H1 (cell line): ENCODE measurements at regions of chr10 and their contacts with region 1.

Region 1: GRCh38 chr10:88728107-88728763 is 22.2 kb downstream of the LIPK start:
- DNase-seq: peak; percentile 93 to 99
- H3K4me3 ChIP-seq: no peak overlapping the region
- H3K27ac ChIP-seq: no peak overlapping the region
- H3K4me1 ChIP-seq: peaks cover 0 to 6% (median 2%) of the 10 kb centered on the region in 4 experiments; a peak in 3 of 7 replicates
- H3K27me3 ChIP-seq: peaks cover 0 to 3% (median 0%) of the 10 kb centered on the region in 4 experiments; a peak in 2 of 7 replicates
- CTCF ChIP-seq: peak; percentile 99 to 100 (median 100)
- EP300 ChIP-seq: peak in 1 of 2 experiments; percentile 53; a peak in 1 of 3 replicates
- POLR2A ChIP-seq: no peak
- RAD21 ChIP-seq: peak; percentile 95

Region 2: DNA sequence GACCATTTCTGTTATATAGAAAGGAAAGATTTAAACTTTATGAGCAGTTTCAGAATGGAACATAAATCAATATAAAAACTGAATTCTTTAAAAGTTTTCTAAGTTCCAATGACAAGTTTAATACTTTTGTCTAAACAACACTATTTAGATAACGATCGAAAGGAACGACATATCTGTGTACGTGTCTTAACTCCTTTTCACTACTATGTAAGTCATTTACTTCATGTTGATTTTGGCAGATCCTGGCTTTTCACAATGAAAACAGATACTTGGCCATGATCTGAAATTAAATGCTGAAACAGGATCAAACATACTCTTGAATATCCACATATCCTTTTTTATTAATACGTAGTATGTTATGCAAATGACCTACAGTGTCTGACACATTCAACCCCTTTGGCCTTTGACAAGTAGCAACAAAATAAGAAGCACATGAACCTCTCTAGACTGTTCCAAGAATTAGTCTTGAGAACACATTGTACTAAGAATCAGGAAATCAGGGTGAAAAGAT is 187.1 kb before region 1 on chr10:
- CTCF ChIA-PET with region 1: no interaction called
- POLR2A ChIA-PET with region 1: no interaction called
- DNase-seq: no peak
- H3K4me3 ChIP-seq: no peak overlapping the region
- H3K27ac ChIP-seq: no peak overlapping the region
- H3K4me1 ChIP-seq: no peaks in the 10 kb centered on the region
- H3K27me3 ChIP-seq: no peaks in the 10 kb centered on the region
- CTCF ChIP-seq: no peak
- EP300 ChIP-seq: no peak
- POLR2A ChIP-seq: no peak
- RAD21 ChIP-seq: no peak

Region 3: DNA sequence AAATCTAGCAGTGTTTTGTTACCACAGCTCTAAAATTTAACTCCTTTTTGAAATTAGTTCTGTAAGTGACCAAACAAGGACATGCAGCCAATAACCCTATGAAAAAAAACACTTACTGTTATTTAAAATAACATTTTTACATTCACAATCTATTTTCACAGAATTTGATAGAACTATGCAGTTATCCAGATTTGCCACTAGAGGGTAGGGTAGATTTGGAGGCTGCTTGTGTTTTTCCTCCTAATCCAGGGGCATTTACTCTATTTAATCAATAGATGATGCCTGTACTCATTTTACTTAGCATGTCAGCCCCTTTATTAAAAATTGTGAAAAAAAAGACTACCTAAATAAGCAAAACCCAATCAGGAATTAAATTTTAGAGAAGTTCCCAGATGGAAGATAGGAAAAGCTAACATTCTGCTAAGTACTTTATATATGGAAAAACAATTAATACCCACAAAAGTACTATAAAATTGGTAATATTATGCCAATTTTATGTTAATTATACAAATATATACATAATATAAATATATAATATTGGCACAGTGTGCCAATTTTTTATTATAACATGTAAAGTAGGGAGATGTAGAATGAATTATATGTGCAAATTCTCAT is 40.3 kb before region 1 on chr10:
- CTCF ChIA-PET with region 1: interaction called, 63 read pairs
- POLR2A ChIA-PET with region 1: no interaction called
- DNase-seq: no peak
- H3K4me3 ChIP-seq: no peak overlapping the region
- H3K27ac ChIP-seq: no peak overlapping the region
- H3K4me1 ChIP-seq: no peaks in the 10 kb centered on the region
- H3K27me3 ChIP-seq: peaks cover 0 to 2% (median 0%) of the 10 kb centered on the region in 4 experiments; a peak in 1 of 7 replicates
- CTCF ChIP-seq: peak in 2 of 3 experiments; percentile 45 to 50; a peak in 2 of 4 replicates
- EP300 ChIP-seq: no peak
- POLR2A ChIP-seq: no peak
- RAD21 ChIP-seq: peak; percentile 61 to 62

Region 4: DNA sequence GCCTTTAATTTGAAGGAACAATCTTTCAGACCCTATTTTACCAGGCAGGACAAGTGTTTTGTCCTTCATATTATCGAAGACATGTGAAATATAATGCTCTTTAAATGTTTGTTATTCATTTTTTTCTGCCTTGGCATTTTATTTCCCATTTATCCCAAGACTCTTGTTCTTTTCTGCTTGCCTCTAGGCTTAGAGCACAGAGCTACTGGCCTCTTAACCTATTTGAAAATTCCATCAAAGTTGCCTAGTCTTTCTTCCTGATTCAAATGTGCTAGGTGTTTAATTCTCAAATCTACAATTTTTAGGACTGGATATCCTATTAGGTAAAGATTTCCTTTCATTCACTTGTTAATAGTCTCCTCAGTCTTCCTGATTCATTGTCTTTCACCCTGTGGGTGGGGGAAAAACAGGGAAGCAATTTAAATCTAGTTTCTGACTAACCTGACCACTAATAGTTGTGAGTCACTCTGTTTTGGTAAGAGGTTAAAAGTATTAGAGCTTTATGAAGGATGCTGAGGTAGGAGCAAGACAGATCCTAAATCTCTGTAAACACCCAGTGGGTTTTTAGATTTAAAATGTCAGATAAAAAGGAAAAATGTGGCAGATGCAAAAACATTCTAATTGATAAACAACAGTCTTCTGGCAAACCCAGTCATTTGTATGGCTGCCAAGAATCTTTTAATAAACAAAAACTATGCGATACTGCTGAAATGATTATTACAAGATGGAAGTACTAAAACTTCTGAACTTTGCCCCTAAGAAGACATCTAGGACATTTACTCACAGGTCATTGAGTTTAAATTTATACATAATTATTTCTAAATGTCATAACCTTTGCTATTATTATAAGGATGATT is 20.6 kb before region 1 on chr10:
- CTCF ChIA-PET with region 1: interaction called, 30 read pairs
- POLR2A ChIA-PET with region 1: interaction called, 4 read pairs
- DNase-seq: no peak
- H3K4me3 ChIP-seq: 0 out of 8 replicates have a peak overlapping the region, but pooled peaks of 1 of the 4 experiments have one; percentile 19
- H3K27ac ChIP-seq: no peak overlapping the region
- H3K4me1 ChIP-seq: peaks cover 0 to 5% (median 1%) of the 10 kb centered on the region in 4 experiments; a peak in 1 of 7 replicates
- H3K27me3 ChIP-seq: peaks cover 17 to 42% (median 31%) of the 10 kb centered on the region in 4 experiments; a peak in 6 of 7 replicates
- CTCF ChIP-seq: no peak
- EP300 ChIP-seq: no peak
- POLR2A ChIP-seq: no peak
- RAD21 ChIP-seq: no peak

Region 5: GRCh38 chr10:88754287-88754686 is 26.1 kb after region 1 on chr10:
- CTCF ChIA-PET with region 1: interaction called, 95 read pairs
- POLR2A ChIA-PET with region 1: no interaction called
- DNase-seq: no peak
- H3K4me3 ChIP-seq: no peak overlapping the region
- H3K27ac ChIP-seq: no peak overlapping the region
- H3K4me1 ChIP-seq: peaks cover 0 to 5% (median 1%) of the 10 kb centered on the region in 4 experiments; a peak in 3 of 7 replicates
- H3K27me3 ChIP-seq: no peaks in the 10 kb centered on the region
- CTCF ChIP-seq: no peak
- EP300 ChIP-seq: no peak
- POLR2A ChIP-seq: no peak
- RAD21 ChIP-seq: no peak

Region 6: DNA sequence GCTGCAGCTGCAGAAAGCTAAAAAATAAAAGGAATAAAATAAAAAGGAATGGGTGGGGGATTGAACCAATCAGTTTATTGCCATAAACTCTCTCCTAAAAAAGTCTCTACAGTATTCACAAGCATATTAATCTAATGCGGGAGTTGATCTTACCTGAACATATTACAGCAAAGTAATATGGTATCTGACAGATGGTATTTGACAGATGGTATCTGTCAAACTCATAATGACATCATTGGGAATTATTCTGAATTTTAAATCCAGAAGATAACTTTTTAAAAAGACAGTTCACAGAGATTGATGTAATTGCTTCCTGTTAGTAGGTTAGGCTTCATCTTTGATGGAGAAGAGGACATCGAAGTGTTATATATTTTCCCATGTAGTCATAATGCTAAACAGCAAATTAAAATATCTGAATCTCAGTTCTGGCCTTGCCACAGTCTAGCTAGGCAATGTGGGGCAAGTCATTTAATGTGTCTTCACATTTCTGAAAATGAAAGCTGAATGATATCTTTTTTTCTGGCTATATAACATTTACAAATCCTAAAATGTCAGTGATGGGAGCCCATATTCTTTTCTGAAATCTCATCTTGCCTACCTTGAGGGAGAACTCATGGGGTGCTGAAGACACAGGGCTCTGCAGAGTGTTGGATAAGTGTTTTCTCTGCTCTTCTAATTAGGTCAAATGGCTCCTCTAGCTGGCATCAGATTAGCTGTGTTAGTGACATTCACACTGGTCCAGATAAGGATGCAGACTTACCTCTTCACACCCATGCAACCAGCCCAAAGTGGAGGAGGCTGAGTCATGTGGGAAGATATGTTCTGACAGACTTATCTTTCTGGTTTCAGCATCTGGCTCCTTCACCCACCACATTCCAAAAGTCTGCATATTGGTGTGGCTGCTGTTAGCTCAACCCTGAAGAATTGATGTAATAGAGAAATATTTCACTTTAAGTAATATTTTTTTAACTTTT is 72.2 kb after region 1 on chr10:
- CTCF ChIA-PET with region 1: interaction called, 16 read pairs
- POLR2A ChIA-PET with region 1: no interaction called
- DNase-seq: no peak
- H3K4me3 ChIP-seq: no peak overlapping the region
- H3K27ac ChIP-seq: no peak overlapping the region
- H3K4me1 ChIP-seq: peaks cover 0 to 3% (median under 1%) of the 10 kb centered on the region in 4 experiments; a peak in 3 of 7 replicates
- H3K27me3 ChIP-seq: no peaks in the 10 kb centered on the region
- CTCF ChIP-seq: no peak
- EP300 ChIP-seq: no peak
- POLR2A ChIP-seq: no peak
- RAD21 ChIP-seq: no peak

Region 7: GRCh38 chr10:88820748-88821389 is 92.6 kb after region 1 on chr10:
- CTCF ChIA-PET with region 1: interaction called, 10 read pairs
- POLR2A ChIA-PET with region 1: no interaction called
- DNase-seq: no peak
- H3K4me3 ChIP-seq: no peak overlapping the region
- H3K27ac ChIP-seq: no peak overlapping the region
- H3K4me1 ChIP-seq: no peaks in the 10 kb centered on the region
- H3K27me3 ChIP-seq: no peaks in the 10 kb centered on the region
- CTCF ChIP-seq: no peak
- EP300 ChIP-seq: no peak
- POLR2A ChIP-seq: no peak
- RAD21 ChIP-seq: no peak